ENCODE measurements at regions of chr1 and their contacts with region 1.

Region 1: GRCh38 chr1:6294615-6295556 is 34.0 kb upstream of the GPR153 start:
- DNase-seq: peak; percentile 53 to 59
- ATAC-seq: peak; percentile 64 to 76 (median 70)
- H3K4me3 ChIP-seq: no peak overlapping the region
- H3K4me3 Mint-ChIP-seq: peak overlapping the region; percentile 82
- H3K27ac ChIP-seq: peak overlapping the region; percentile 81
- H3K27ac Mint-ChIP-seq: peak overlapping the region; percentile 90 to 91
- H3K4me1 ChIP-seq: peaks cover 59% of the 10 kb centered on the region
- H3K4me1 Mint-ChIP-seq: peaks cover 50 to 54% of the 10 kb centered on the region in 2 donors
- H3K27me3 ChIP-seq: no peaks in the 10 kb centered on the region
- H3K27me3 Mint-ChIP-seq: no peaks in the 10 kb centered on the region
- CTCF ChIP-seq: no peak

Region 2: GRCh38 chr1:5927506-5928370 is 367.1 kb before region 1 on chr1:
- intact Hi-C with region 1: no loop called
- DNase-seq: no peak
- ATAC-seq: no peak
- H3K4me3 ChIP-seq: no peak overlapping the region
- H3K4me3 Mint-ChIP-seq: no peak overlapping the region
- H3K27ac ChIP-seq: no peak overlapping the region
- H3K27ac Mint-ChIP-seq: no peak overlapping the region
- H3K4me1 ChIP-seq: no peaks in the 10 kb centered on the region
- H3K4me1 Mint-ChIP-seq: peaks cover 0 to 11% of the 10 kb centered on the region in 2 donors
- H3K27me3 ChIP-seq: no peaks in the 10 kb centered on the region
- H3K27me3 Mint-ChIP-seq: no peaks in the 10 kb centered on the region
- CTCF ChIP-seq: no peak

Region 3: GRCh38 chr1:6259491-6260425 is 35.1 kb before region 1 on chr1:
- intact Hi-C with region 1: loop called (anchors 1 kb)
- DNase-seq: peak; percentile 80 to 89
- ATAC-seq: peak; percentile 77 to 81 (median 77)
- H3K4me3 ChIP-seq: peak overlapping the region; percentile 53
- H3K4me3 Mint-ChIP-seq: peak overlapping the region; percentile 66
- H3K27ac ChIP-seq: no peak overlapping the region
- H3K27ac Mint-ChIP-seq: peak overlapping the region in 1 of 2 donors; percentile 54
- H3K4me1 ChIP-seq: peaks cover 21% of the 10 kb centered on the region
- H3K4me1 Mint-ChIP-seq: peaks cover 0 to 11% of the 10 kb centered on the region in 2 donors
- H3K27me3 ChIP-seq: peaks cover 2% of the 10 kb centered on the region
- H3K27me3 Mint-ChIP-seq: no peaks in the 10 kb centered on the region
- CTCF ChIP-seq: no peak